ENCODE measurements at regions of chr1 and their contacts with region 1.

Region 1: GRCh38 chr1:235971571-235972310 is 93.1 kb downstream of the NID1 start:
- DNase-seq: peak; percentile 85
- H3K4me3 ChIP-seq: peak overlapping the region; percentile 20 to 36
- H3K27ac ChIP-seq: peak overlapping the region; percentile 87 to 98
- H3K4me1 ChIP-seq: peaks cover 3 to 10% of the 10 kb centered on the region in 2 experiments
- H3K27me3 ChIP-seq: no peaks in the 10 kb centered on the region
- CTCF ChIP-seq: peak; percentile 88
- EP300 ChIP-seq: peak in 1 of 2 experiments; percentile 26; a peak in 2 of 4 replicates
- RAD21 ChIP-seq: peak; percentile 96

Region 2: DNA sequence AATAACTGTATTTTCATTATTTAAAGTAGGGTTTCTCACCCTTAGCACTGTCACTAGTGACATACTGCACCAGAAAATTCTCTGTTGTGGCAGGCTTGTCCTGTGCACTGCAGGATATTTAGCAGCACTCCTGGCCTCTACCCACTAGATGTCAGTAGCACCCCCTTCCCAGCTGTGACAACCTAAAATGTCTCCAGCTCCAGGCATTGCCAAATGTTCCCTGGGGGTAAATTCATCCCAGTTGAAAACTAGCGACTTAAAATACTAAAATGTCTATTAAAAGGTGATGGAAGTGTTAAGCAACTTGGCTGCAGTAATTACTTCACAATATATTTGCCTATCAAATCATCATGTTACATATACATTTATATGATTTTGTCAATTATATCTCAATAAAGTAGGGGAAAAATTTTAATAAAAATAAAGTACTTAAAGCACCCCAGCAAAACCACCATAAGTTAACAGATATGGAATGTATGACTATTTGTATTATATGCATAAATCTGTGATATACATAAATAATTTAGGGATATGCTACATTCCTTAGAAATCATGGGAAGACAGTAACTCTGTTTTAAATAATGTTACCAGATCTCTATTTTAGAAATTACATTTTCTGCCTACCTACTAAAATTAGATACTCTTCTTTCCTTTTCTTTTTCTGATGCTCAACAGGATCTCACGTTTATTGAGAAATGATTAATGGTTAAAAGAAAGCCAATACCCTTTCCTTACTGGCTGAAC is 718.4 kb before region 1 on chr1:
- CTCF ChIA-PET with region 1: no interaction called
- POLR2A ChIA-PET with region 1: no interaction called
- DNase-seq: peak; percentile 50
- H3K4me3 ChIP-seq: no peak overlapping the region; a peak in 1 of 4 replicates
- H3K27ac ChIP-seq: no peak overlapping the region
- H3K4me1 ChIP-seq: no peaks in the 10 kb centered on the region; a peak in 1 of 4 replicates
- H3K27me3 ChIP-seq: no peaks in the 10 kb centered on the region
- CTCF ChIP-seq: peak; percentile 94
- EP300 ChIP-seq: no peak
- RAD21 ChIP-seq: peak; percentile 89

Region 3: GRCh38 chr1:235556807-235557206 is 414.9 kb before region 1 on chr1:
- CTCF ChIA-PET with region 1: interaction called, 12 read pairs
- POLR2A ChIA-PET with region 1: no interaction called
- DNase-seq: no peak
- H3K4me3 ChIP-seq: no peak overlapping the region
- H3K27ac ChIP-seq: no peak overlapping the region
- H3K4me1 ChIP-seq: peaks cover 0 to 25% of the 10 kb centered on the region in 2 experiments; a peak in 2 of 4 replicates
- H3K27me3 ChIP-seq: no peaks in the 10 kb centered on the region
- CTCF ChIP-seq: no peak
- EP300 ChIP-seq: no peak
- RAD21 ChIP-seq: no peak

Region 4: GRCh38 chr1:235697508-235697907 is 274.2 kb before region 1 on chr1:
- CTCF ChIA-PET with region 1: no interaction called
- POLR2A ChIA-PET with region 1: no interaction called
- DNase-seq: no peak
- H3K4me3 ChIP-seq: no peak overlapping the region
- H3K27ac ChIP-seq: no peak overlapping the region
- H3K4me1 ChIP-seq: no peaks in the 10 kb centered on the region
- H3K27me3 ChIP-seq: no peaks in the 10 kb centered on the region
- CTCF ChIP-seq: no peak
- EP300 ChIP-seq: no peak
- RAD21 ChIP-seq: no peak

Region 5: GRCh38 chr1:235802947-235803346 is 168.8 kb before region 1 on chr1:
- CTCF ChIA-PET with region 1: interaction called, 11 read pairs
- POLR2A ChIA-PET with region 1: no interaction called
- DNase-seq: no peak
- H3K4me3 ChIP-seq: no peak overlapping the region
- H3K27ac ChIP-seq: no peak overlapping the region
- H3K4me1 ChIP-seq: no peaks in the 10 kb centered on the region; a peak in 1 of 4 replicates
- H3K27me3 ChIP-seq: no peaks in the 10 kb centered on the region
- CTCF ChIP-seq: no peak
- EP300 ChIP-seq: no peak
- RAD21 ChIP-seq: no peak

Region 6: GRCh38 chr1:235866913-235867845 is 104.6 kb before region 1 on chr1:
- CTCF ChIA-PET with region 1: interaction called, 87 read pairs
- POLR2A ChIA-PET with region 1: interaction called, 8 read pairs
- DNase-seq: peak; percentile 99
- H3K4me3 ChIP-seq: peak overlapping the region; percentile 69 to 72
- H3K27ac ChIP-seq: peak overlapping the region; percentile 83 to 88
- H3K4me1 ChIP-seq: peaks cover 0 to 7% of the 10 kb centered on the region in 2 experiments; a peak in 2 of 4 replicates
- H3K27me3 ChIP-seq: no peaks in the 10 kb centered on the region
- CTCF ChIP-seq: no peak
- EP300 ChIP-seq: no peak
- RAD21 ChIP-seq: no peak

Region 7: DNA sequence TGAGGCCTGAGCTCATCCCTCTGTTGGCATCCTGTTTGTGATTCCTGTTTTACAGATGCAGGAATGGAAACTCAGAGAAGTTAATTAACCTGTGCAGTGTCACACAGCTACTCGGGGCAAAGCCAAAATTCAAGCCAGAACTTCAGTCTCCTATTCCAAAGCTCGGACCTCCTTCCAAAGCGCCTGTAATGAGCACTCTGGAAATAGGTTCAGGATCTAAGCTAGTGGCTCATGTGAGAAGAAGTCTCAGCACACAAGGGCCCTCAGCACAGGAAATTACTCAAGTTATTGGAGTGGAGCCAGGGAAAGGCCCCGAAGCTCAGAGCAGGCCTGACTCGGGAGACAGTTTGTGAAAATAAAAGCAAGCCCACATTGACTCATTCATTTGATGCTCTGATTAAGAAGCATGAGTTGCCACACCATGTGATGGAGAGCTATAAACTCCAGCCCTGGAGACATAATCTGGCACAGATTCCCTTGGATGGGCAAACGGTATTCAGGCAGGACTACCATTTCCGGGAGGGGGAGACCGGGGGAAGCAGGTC is 54.4 kb before region 1 on chr1:
- CTCF ChIA-PET with region 1: interaction called, 32 read pairs
- POLR2A ChIA-PET with region 1: interaction called, 10 read pairs
- DNase-seq: peak; percentile 66
- H3K4me3 ChIP-seq: no peak overlapping the region
- H3K27ac ChIP-seq: peak overlapping the region; percentile 93 to 97
- H3K4me1 ChIP-seq: peaks cover 44 to 45% of the 10 kb centered on the region in 2 experiments
- H3K27me3 ChIP-seq: no peaks in the 10 kb centered on the region
- CTCF ChIP-seq: no peak
- EP300 ChIP-seq: peak; percentile 72 to 96
- RAD21 ChIP-seq: no peak

Region 8: DNA sequence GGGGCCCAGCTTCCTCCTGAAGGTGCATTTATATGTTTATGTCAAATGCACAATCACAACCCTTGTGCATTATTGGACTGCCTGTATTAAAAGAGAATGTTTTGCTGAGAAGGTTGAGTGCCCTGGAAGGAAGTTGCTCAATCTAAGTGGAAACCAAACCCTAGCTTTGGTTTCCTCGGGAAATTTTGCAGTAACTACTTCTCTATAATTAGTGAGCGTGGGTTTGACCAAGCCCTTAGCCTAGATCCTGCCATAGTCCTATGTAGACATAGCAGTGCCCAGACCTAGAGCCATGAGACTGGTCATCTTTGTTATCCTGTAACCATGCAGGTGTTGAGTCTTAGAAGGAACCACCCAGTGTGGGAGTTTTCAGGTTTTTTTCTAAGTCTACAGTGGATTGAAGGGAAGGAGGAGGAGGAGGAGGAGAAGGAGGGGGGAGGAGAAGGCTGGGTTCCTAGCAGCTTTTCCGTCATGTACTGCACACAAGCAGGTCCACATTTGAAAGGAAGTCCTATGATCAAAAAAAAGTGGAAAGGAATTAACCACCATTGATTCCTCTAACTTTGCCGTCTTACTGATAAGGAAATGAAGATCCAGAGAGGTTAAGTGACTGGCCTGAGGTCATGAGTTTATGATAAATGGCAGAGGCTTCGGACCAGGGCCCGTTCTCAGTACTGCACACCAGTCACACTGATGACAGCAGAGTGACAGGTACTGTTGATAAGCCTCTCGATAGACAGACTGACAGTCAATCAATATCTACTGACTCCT is 32.8 kb before region 1 on chr1:
- CTCF ChIA-PET with region 1: interaction called, 14 read pairs
- POLR2A ChIA-PET with region 1: no interaction called
- DNase-seq: no peak
- H3K4me3 ChIP-seq: no peak overlapping the region
- H3K27ac ChIP-seq: no peak overlapping the region
- H3K4me1 ChIP-seq: no peaks in the 10 kb centered on the region
- H3K27me3 ChIP-seq: no peaks in the 10 kb centered on the region
- CTCF ChIP-seq: no peak
- EP300 ChIP-seq: no peak
- RAD21 ChIP-seq: no peak

Region 9: GRCh38 chr1:235984041-235984825 is 12.5 kb after region 1 on chr1:
- CTCF ChIA-PET with region 1: interaction called, 18 read pairs
- POLR2A ChIA-PET with region 1: no interaction called
- DNase-seq: no peak
- H3K4me3 ChIP-seq: no peak overlapping the region; a peak in 1 of 4 replicates
- H3K27ac ChIP-seq: peak overlapping the region; percentile 77 to 96; a peak in 3 of 4 replicates
- H3K4me1 ChIP-seq: peaks cover 3 to 9% of the 10 kb centered on the region in 2 experiments; a peak in 2 of 4 replicates
- H3K27me3 ChIP-seq: no peaks in the 10 kb centered on the region
- CTCF ChIP-seq: no peak
- EP300 ChIP-seq: peak in 1 of 2 experiments; percentile 67; a peak in 1 of 4 replicates
- RAD21 ChIP-seq: no peak